Natural killer cell (primary cell): ENCODE measurements at regions of chr17 and their contacts with region 1.

Region 1: DNA sequence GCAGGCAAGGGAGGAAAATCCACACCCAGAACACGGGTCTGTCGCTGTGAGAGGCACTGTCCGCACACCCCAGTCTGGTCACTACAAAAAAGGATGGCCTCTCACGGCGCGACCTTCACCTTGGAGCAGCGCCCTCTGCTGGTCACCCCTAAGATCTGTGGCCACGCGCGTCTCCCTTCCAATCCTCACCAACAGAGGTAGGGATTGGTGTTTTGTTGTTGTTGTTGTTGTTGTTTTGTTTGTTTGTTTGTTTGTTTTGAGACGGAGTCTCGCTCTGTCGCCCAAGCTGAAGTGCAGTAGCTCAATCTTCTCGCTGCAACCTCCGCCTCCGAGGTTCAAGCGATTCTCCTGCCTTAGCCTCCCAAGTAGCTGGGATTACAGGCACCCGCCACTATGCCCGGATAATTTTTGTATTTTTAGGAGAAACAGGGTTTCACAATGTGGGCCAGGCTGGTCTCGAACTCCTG is 15.0 kb upstream of the C17orf58 start:
- DNase-seq: peak; percentile 67 to 81
- ATAC-seq: peak; percentile 89 to 96 (median 92)
- H3K4me3 ChIP-seq: no peak overlapping the region
- H3K4me3 Mint-ChIP-seq: peak overlapping the region; percentile 63
- H3K27ac ChIP-seq: no peak overlapping the region
- H3K27ac Mint-ChIP-seq: no peak overlapping the region
- H3K4me1 ChIP-seq: peaks cover 6% of the 10 kb centered on the region
- H3K4me1 Mint-ChIP-seq: peaks cover 5 to 6% of the 10 kb centered on the region in 2 donors
- H3K27me3 ChIP-seq: no peaks in the 10 kb centered on the region
- H3K27me3 Mint-ChIP-seq: peaks cover 0 to 2% of the 10 kb centered on the region in 2 donors
- CTCF ChIP-seq: peak; percentile 84

Region 2: GRCh38 chr17:67959288-67959900 is 51.8 kb before region 1 on chr17:
- intact Hi-C with region 1: loop called (anchors 5 kb)
- DNase-seq: no peak
- ATAC-seq: no peak
- H3K4me3 ChIP-seq: no peak overlapping the region
- H3K4me3 Mint-ChIP-seq: no peak overlapping the region
- H3K27ac ChIP-seq: no peak overlapping the region
- H3K27ac Mint-ChIP-seq: peak overlapping the region; percentile 15 to 36
- H3K4me1 ChIP-seq: no peaks in the 10 kb centered on the region
- H3K4me1 Mint-ChIP-seq: peaks cover 0 to 8% of the 10 kb centered on the region in 2 donors
- H3K27me3 ChIP-seq: no peaks in the 10 kb centered on the region
- H3K27me3 Mint-ChIP-seq: no peaks in the 10 kb centered on the region
- CTCF ChIP-seq: no peak